MCF 10A (cell line): ENCODE measurements at regions of chr1 and their contacts with region 1.

Region 1: GRCh38 chr1:211830330-211831142 is at the start of gene LPGAT1:
- DNase-seq: peak; percentile 87
- H3K4me3 Mint-ChIP-seq: peak within 1 kb of the TSS; percentile 95
- H3K27ac Mint-ChIP-seq: peak within 1 kb of the TSS; percentile 92
- H3K4me1 Mint-ChIP-seq: peaks cover 33% of the 10 kb centered on the region
- H3K27me3 Mint-ChIP-seq: no peaks in the 10 kb centered on the region
- CTCF ChIP-seq: peak; percentile 91
- total RNA-seq, gene LPGAT1: 76.2 and 82.4 TPM in 2 replicates

Region 2: GRCh38 chr1:211813590-211813989 is 16.9 kb before region 1 on chr1:
- CTCF ChIA-PET with region 1: interaction called, 47 read pairs
- POLR2A ChIA-PET with region 1: interaction called, 77 read pairs
- intact Hi-C with region 1: no loop called
- DNase-seq: peak; percentile 93
- H3K4me3 Mint-ChIP-seq: no peak overlapping the region
- H3K27ac Mint-ChIP-seq: no peak overlapping the region
- H3K4me1 Mint-ChIP-seq: peaks cover 7% of the 10 kb centered on the region
- H3K27me3 Mint-ChIP-seq: no peaks in the 10 kb centered on the region
- CTCF ChIP-seq: no peak

Region 3: DNA sequence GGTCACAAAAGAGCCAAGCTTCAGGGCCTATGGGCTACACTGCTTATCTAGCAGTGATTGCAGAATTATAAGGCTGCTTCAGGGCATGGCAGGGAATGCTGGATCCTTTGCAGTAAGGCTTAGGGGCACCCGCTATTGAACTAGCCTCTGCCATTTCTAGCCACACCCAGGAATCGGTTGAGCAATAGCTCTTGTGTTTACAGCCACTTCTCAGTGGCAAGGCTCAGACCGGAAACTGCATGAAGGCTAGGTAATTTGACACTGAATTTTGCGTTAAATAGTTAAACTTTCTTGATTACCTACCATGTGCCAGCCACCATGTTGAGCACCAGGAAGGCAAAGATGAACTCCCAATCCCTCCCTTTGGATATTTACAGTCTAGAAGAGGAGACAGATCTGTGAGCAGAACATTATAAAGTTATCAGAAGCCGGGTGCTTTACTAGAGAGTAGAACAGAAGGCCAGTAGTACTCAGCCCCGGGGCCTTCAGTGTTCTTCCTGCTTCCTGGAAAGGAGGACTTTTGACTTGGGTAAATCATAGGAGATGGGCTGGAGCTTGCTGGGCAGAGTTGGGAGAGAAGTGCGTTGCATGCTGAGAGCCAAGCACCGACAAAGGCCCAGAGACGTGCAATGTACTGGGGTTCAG is 98.6 kb after region 1 on chr1:
- CTCF ChIA-PET with region 1: interaction called, 4 read pairs
- POLR2A ChIA-PET with region 1: interaction called, 16 read pairs
- intact Hi-C with region 1: loop called (anchors 5 kb)
- DNase-seq: peak; percentile 96
- H3K4me3 Mint-ChIP-seq: peak overlapping the region; percentile 62
- H3K27ac Mint-ChIP-seq: peak overlapping the region; percentile 95
- H3K4me1 Mint-ChIP-seq: peaks cover 21% of the 10 kb centered on the region
- H3K27me3 Mint-ChIP-seq: no peaks in the 10 kb centered on the region
- CTCF ChIP-seq: no peak

Region 4: GRCh38 chr1:211951856-211952255 is 121.3 kb after region 1 on chr1:
- CTCF ChIA-PET with region 1: interaction called, 3 read pairs
- POLR2A ChIA-PET with region 1: interaction called, 10 read pairs
- intact Hi-C with region 1: no loop called
- DNase-seq: peak; percentile 98
- H3K4me3 Mint-ChIP-seq: no peak overlapping the region
- H3K27ac Mint-ChIP-seq: no peak overlapping the region
- H3K4me1 Mint-ChIP-seq: peaks cover 17% of the 10 kb centered on the region
- H3K27me3 Mint-ChIP-seq: no peaks in the 10 kb centered on the region
- CTCF ChIP-seq: no peak

Region 5: DNA sequence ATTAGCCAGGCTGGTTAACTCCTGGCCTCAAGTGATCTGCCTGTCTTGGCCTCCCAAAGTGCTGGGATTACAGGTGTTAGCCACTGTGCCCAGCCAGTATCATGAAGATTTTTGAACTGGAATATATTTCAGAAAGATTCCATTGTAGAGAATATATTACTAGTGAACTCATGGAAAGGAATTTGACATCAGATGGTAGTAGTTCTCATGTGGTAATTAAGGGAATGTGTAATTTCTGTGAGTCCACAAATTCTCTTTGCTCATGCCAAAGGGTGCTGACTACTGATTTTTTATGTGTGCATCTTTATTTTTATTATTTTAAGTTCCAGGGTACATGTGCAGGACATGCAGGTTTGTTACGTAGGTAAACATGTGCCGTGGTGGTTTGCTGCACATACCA is 215.4 kb after region 1 on chr1:
- CTCF ChIA-PET with region 1: no interaction called
- POLR2A ChIA-PET with region 1: no interaction called
- intact Hi-C with region 1: no loop called
- DNase-seq: no peak
- H3K4me3 Mint-ChIP-seq: no peak overlapping the region
- H3K27ac Mint-ChIP-seq: no peak overlapping the region
- H3K4me1 Mint-ChIP-seq: peaks cover 23% of the 10 kb centered on the region
- H3K27me3 Mint-ChIP-seq: no peaks in the 10 kb centered on the region
- CTCF ChIP-seq: no peak